ENCODE measurements at regions of chr12 and their contacts with region 1.

Region 1: GRCh38 chr12:69900720-69901131 is 75.7 kb downstream of the MYRFL start:
- DNase-seq: peak; percentile 78 to 79
- H3K4me3 ChIP-seq: no peak overlapping the region
- H3K27ac ChIP-seq: no peak overlapping the region
- H3K4me1 ChIP-seq: peaks cover 3% of the 10 kb centered on the region in 2 donors
- H3K27me3 ChIP-seq: no peaks in the 10 kb centered on the region
- CTCF ChIP-seq: peak; percentile 24 to 92 (median 74)
- POLR2A ChIP-seq: no peak

Region 2: GRCh38 chr12:70365648-70366518 is 465.2 kb after region 1 on chr12 and contains the start of gene KCNMB4:
- intact Hi-C with region 1: loop called (anchors 10 kb)
- DNase-seq: peak; percentile 64 to 70
- H3K4me3 ChIP-seq: peak within 1 kb of the TSS; percentile 46 to 82 (median 58)
- H3K27ac ChIP-seq: peak within 1 kb of the TSS in 2 of 3 donors; percentile 55 to 75
- H3K4me1 ChIP-seq: peaks cover 7 to 14% of the 10 kb centered on the region in 2 donors
- H3K27me3 ChIP-seq: no peaks in the 10 kb centered on the region
- CTCF ChIP-seq: no peak
- POLR2A ChIP-seq: peak in 1 of 2 donors; percentile 33
- total RNA-seq, gene KCNMB4: 2.1 to 5.1 (median 3.8) TPM

Region 3: DNA sequence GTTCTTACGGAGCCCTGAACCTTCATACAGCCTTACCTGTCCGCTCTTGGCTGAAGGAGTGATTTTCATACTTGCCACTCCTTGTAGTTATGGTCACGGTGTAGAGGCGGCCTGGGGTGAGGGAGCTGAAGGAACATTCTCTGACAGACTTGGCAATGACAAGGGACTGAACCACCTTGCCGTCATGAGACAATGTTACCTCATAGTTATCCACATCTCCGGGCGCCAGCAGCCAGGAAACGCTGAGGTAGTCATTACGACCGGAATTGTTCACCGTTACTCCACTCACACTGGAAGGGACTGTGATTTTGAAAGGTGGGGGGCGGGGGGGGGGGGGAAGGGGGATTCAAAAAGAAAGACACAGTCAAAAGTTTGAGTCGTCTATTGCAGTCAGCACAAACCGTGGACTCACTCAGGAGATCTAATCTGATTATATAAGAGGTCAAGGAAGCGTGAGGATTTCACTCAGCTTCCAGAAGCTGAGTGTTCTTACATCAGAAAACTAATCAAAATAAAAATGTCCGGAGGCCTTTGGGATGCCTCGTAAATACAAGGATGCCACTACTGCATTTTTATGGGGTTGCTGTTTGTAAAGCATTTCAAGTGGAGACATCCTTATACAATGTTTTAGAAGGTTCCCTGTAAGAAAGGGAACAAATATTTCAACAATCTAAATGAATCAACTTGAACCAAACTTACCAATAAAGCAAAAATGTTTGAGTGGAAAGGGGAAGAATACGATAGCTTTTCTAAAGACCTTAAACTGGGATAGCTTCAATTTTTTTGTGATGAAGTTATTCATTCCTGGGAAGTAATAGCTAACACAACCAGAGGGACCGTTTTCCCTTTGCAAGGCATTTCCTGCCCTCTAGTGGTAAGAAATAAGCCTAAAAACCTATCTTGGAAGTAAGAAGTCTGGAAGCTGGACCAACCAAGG is 675.9 kb after region 1 on chr12:
- intact Hi-C with region 1: loop called (anchors 5 kb)
- DNase-seq: no peak
- H3K4me3 ChIP-seq: no peak overlapping the region
- H3K27ac ChIP-seq: no peak overlapping the region
- H3K4me1 ChIP-seq: no peaks in the 10 kb centered on the region
- H3K27me3 ChIP-seq: no peaks in the 10 kb centered on the region
- CTCF ChIP-seq: peak; percentile 39 to 74 (median 60)
- POLR2A ChIP-seq: no peak

Region 4: GRCh38 chr12:70733385-70733784 is 832.7 kb after region 1 on chr12:
- intact Hi-C with region 1: loop called (anchors 10 kb)
- DNase-seq: no peak
- H3K4me3 ChIP-seq: no peak overlapping the region
- H3K27ac ChIP-seq: no peak overlapping the region
- H3K4me1 ChIP-seq: no peaks in the 10 kb centered on the region
- H3K27me3 ChIP-seq: no peaks in the 10 kb centered on the region
- CTCF ChIP-seq: peak in 4 of 6 experiments; percentile 34 to 69 (median 63)
- POLR2A ChIP-seq: no peak